Activated T-helper 1 cell treated with anti-CD3 and anti-CD28 coated beads, Interleukin-12 subunit alpha, Interleukin-12 subunit beta, Interleukin-2, Interleukin-4 antibody, amounts not matched to agents 30 ng/mL and 10 ng/mL and 1 ng/mL, durations not matched to agents 14 hours and 24 hours and 36 hours (primary cell): ENCODE measurements at regions of chr1 and their contacts with region 1.

Region 1: DNA sequence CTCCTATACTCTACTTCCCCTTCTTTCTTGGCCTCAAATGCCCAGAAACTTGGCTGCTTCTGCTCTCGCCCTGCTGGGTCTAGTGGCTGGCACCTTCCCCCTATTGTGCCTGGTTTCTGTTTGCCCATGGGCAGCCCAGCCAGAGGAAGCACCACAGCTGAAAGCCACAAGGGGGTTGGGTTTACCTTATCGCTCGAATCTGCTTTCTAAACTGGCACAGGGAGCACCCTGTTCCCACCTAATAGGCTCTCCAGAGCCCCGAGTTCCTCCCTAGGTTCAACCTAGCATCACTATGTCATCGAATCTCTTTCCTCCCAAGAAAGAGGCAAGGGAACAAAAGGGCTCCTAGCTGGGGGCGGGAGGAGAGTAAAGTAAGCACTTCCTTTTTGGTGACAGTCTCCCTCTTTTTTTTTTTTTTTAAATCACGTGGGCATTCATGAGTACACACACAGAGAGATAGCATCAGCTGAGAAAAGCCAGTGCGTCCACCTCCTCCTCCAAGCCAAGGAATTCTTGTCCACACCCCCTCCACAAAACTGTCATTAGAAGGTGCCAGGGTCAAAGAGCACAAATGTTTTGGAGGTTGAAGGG is 72.8 kb downstream of the PLEKHA6 start:
- DNase-seq: no peak
- H3K4me3 Mint-ChIP-seq: peak overlapping the region; percentile 66
- H3K27ac Mint-ChIP-seq: peak overlapping the region; percentile 57
- H3K4me1 Mint-ChIP-seq: peaks cover 17% of the 10 kb centered on the region
- H3K27me3 Mint-ChIP-seq: peaks cover 29% of the 10 kb centered on the region

Region 2: GRCh38 chr1:204323887-204324286 is 37.0 kb after region 1 on chr1:
- intact Hi-C with region 1: loop called (anchors 2 kb)
- DNase-seq: peak; percentile 4
- H3K4me3 Mint-ChIP-seq: peak overlapping the region; percentile 58
- H3K27ac Mint-ChIP-seq: peak overlapping the region; percentile 84
- H3K4me1 Mint-ChIP-seq: peaks cover 34% of the 10 kb centered on the region
- H3K27me3 Mint-ChIP-seq: peaks cover 6% of the 10 kb centered on the region